Mammary epithelial cell (primary cell): ENCODE measurements at regions of chr3 and their contacts with region 1.

Region 1: GRCh38 chr3:44899683-44900367 is 25.4 kb downstream of the TGM4 start:
- DNase-seq: peak; percentile 50
- H3K4me3 ChIP-seq: no peak overlapping the region
- H3K27ac ChIP-seq: peak overlapping the region; percentile 30
- H3K4me1 ChIP-seq: peaks cover 27% of the 10 kb centered on the region
- H3K27me3 ChIP-seq: no peaks in the 10 kb centered on the region
- CTCF ChIP-seq: no peak

Region 2: GRCh38 chr3:44861412-44862220 is 38.2 kb before region 1 on chr3 and contains the start of gene TMEM42:
- CTCF ChIA-PET with region 1: no interaction called
- dilution Hi-C with region 1: no loop called
- in situ Hi-C with region 1: no loop called
- intact Hi-C with region 1: loop called (anchors 5 kb)
- DNase-seq: peak; percentile 73
- H3K4me3 ChIP-seq: peak within 1 kb of the TSS; percentile 15 to 57 (median 43)
- H3K27ac ChIP-seq: no peak within 1 kb of the TSS
- H3K4me1 ChIP-seq: peaks cover 4% of the 10 kb centered on the region
- H3K27me3 ChIP-seq: no peaks in the 10 kb centered on the region
- CTCF ChIP-seq: no peak
- total RNA-seq, gene TMEM42: 11.8 to 12.9 TPM

Region 3: DNA sequence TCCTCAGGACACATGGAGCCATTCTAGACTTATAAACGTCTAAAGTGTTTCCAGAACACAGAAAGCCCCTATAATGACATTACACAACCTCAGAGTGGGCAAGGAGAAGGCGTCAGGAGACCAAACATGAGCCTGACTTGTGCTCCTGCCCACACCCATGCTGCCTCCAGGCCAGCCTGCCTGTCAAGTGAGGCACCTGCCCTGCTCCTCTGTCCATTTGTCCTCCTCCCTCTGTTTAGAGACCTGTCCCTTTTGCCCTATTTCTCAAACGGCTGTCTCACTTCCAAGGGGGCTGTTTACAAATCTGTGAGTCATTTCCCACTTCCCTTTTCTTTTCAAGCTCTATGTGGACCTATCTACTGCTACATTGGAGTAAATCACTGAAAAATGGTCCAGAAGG is 55.1 kb after region 1 on chr3:
- CTCF ChIA-PET with region 1: no interaction called
- dilution Hi-C with region 1: no loop called
- in situ Hi-C with region 1: no loop called
- intact Hi-C with region 1: no loop called
- DNase-seq: no peak
- H3K4me3 ChIP-seq: no peak overlapping the region
- H3K27ac ChIP-seq: no peak overlapping the region
- H3K4me1 ChIP-seq: peaks cover 9% of the 10 kb centered on the region
- H3K27me3 ChIP-seq: no peaks in the 10 kb centered on the region
- CTCF ChIP-seq: no peak